ENCODE measurements at regions of chr12 and their contacts with region 1.

Region 1: DNA sequence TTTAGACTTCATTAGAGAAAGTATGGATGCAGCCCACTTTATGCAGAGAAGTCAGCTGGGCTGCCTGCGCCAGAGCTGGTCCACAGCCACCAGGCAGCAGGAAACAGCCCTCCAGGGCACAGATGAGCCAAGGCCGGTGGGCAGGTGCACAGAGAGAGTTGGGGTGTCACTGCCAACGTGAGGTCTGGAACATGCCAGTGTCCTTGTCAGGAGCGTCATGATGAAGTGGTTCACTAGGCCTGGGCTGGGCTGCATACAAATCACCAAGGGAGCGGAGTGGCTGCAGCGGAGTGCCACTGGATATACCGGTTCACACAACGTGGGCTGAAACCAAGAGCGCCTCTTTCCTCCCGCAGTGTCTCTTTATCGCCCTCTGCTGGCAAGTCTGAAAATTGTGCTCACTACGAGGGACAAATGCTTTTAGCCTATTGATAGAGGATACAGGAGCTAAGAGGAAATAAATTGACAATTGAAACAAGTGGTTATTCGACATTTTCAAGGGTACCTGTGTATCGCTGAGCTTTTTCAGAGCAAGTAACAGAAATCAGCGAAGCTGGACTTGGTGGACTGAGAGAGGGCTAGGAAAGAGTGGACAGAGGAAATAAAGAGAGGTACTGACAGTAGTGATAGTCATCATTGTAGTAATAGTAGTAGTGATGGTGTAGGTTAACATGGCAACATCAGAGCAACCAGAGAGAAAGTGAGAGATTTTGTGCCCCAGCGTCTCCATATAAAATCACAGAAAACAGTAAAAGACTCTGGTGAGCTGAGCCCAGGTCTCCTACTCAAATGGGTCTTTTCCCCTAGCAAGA is 52.0 kb upstream of the ITPR2 start:
- DNase-seq: peak; percentile 73
- H3K4me3 ChIP-seq: no peak overlapping the region; a peak in 1 of 4 replicates
- H3K27ac ChIP-seq: peak overlapping the region in 1 of 2 experiments; percentile 60; a peak in 1 of 4 replicates
- H3K4me1 ChIP-seq: peaks cover 0 to 4% of the 10 kb centered on the region in 2 experiments; a peak in 1 of 4 replicates
- H3K27me3 ChIP-seq: no peaks in the 10 kb centered on the region
- CTCF ChIP-seq: peak; percentile 94
- EP300 ChIP-seq: no peak
- RAD21 ChIP-seq: peak; percentile 95

Region 2: DNA sequence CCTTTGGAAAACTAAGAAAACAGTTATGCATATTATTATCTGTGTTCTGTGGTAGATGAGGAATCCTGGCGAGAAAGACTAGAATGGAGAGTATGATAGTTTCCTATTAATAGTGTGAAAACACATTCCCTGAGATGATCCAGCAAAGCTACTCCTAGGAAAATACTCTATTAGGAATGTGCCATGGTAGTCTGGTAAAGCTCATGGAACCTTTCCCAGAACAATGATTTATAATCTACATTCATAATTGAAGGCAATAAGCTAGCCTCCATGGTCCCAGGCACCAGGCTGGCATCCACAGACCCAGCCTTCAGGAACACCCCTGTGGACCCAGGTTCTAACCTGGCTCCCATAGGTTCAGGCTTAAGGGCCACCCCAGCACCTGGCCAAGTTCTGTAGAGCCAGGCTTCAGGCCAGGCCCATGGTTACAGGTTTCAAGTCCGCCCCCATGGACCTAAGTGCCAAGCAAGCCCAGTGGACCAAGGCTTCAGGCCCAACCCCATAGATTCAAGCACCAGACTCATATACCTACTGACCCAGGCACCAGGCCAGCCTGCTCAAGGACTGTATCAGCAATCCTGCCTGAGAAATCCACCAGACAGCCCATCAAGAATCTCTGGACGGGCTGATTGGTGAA is 124.2 kb before region 1 on chr12:
- CTCF ChIA-PET with region 1: no interaction called
- POLR2A ChIA-PET with region 1: no interaction called
- DNase-seq: no peak
- H3K4me3 ChIP-seq: peak overlapping the region in 1 of 2 experiments; percentile 6; a peak in 1 of 4 replicates
- H3K27ac ChIP-seq: no peak overlapping the region
- H3K4me1 ChIP-seq: no peaks in the 10 kb centered on the region
- H3K27me3 ChIP-seq: no peaks in the 10 kb centered on the region
- CTCF ChIP-seq: no peak
- EP300 ChIP-seq: no peak
- RAD21 ChIP-seq: no peak

Region 3: GRCh38 chr12:26832822-26833742 is 51.9 kb before region 1 on chr12 and contains the start of gene ITPR2:
- CTCF ChIA-PET with region 1: interaction called, 27 read pairs
- POLR2A ChIA-PET with region 1: interaction called, 3 read pairs
- DNase-seq: peak; percentile 100
- H3K4me3 ChIP-seq: peak within 1 kb of the TSS; percentile 76 to 92
- H3K27ac ChIP-seq: peak within 1 kb of the TSS; percentile 92 to 97
- H3K4me1 ChIP-seq: peaks cover 11 to 16% of the 10 kb centered on the region in 2 experiments; a peak in 3 of 4 replicates
- H3K27me3 ChIP-seq: no peaks in the 10 kb centered on the region
- CTCF ChIP-seq: peak; percentile 36
- EP300 ChIP-seq: peak in 1 of 2 experiments; percentile 6; a peak in 1 of 4 replicates
- RAD21 ChIP-seq: peak; percentile 41
- polyA plus RNA-seq, gene ITPR2: 2.3 and 3.0 TPM in 2 replicates

Region 4: DNA sequence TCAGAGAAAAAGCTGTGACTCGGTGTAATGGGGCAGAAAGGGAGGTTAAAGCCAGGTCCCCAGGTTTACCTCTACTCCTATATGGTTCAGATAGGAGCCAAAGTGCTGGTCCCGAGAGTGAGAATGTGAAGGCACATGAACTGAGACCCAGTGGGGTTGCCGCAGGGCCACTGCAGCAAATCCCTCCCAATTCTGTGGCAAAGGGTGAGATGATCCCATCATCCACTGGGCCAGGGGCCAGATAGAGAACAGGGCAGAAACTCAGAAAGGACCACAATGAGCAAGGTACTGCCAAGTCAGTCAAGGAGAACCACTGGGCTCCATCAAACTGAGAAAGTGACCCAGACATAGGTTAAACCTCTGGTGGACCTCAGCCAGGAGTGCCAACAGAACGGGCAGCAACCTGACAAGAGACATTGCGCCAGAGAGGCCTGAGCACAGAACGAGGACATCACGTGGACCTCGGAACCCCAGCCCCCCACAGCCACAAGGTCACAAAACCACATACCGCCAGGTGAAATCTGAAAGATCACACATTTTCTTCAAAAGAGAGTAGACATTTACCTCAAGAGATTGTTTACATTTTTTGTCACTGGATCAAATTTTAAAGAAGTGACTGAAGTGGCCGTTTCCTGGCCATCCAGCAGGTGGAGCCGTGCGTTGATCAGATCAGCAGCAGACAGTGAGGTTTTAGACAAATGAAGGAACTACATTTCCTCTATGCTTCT is 31.5 kb before region 1 on chr12:
- CTCF ChIA-PET with region 1: interaction called, 70 read pairs
- POLR2A ChIA-PET with region 1: no interaction called
- DNase-seq: peak; percentile 63
- H3K4me3 ChIP-seq: no peak overlapping the region; a peak in 1 of 4 replicates
- H3K27ac ChIP-seq: peak overlapping the region in 1 of 2 experiments; percentile 30; a peak in 1 of 4 replicates
- H3K4me1 ChIP-seq: peaks cover 4 to 12% of the 10 kb centered on the region in 2 experiments; a peak in 3 of 4 replicates
- H3K27me3 ChIP-seq: no peaks in the 10 kb centered on the region
- CTCF ChIP-seq: peak; percentile 91
- EP300 ChIP-seq: no peak
- RAD21 ChIP-seq: peak; percentile 90

Region 5: GRCh38 chr12:26870491-26871419 is 14.2 kb before region 1 on chr12:
- CTCF ChIA-PET with region 1: interaction called, 38 read pairs
- POLR2A ChIA-PET with region 1: interaction called, 3 read pairs
- DNase-seq: peak; percentile 53
- H3K4me3 ChIP-seq: no peak overlapping the region
- H3K27ac ChIP-seq: peak overlapping the region in 1 of 2 experiments; percentile 84; a peak in 2 of 4 replicates
- H3K4me1 ChIP-seq: peaks cover 0 to 23% of the 10 kb centered on the region in 2 experiments; a peak in 2 of 4 replicates
- H3K27me3 ChIP-seq: no peaks in the 10 kb centered on the region
- CTCF ChIP-seq: no peak
- EP300 ChIP-seq: peak in 1 of 2 experiments; percentile 79; a peak in 2 of 4 replicates
- RAD21 ChIP-seq: peak; percentile 9; the same call in 1 of the 2 replicates

Region 6: DNA sequence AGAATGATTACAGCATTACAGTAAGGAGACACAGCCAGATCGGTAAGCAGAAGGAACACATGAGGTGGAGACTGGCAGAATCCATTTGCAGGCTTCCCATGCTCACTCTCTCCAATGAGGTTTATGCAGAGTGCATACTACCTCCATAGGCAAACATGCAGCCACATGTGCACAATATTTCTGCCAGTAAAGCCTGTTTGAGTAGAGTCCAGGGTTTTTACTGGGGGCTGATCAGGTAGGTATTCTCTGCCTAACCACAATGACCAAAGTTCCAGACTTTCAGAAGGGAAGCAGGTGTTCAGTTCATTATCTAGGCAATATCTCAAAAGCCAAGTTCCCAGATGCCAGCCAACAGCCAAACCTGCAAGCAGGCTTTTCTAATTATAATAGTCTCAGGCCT is 21.7 kb after region 1 on chr12:
- CTCF ChIA-PET with region 1: interaction called, 14 read pairs
- POLR2A ChIA-PET with region 1: no interaction called
- DNase-seq: peak; percentile 10
- H3K4me3 ChIP-seq: no peak overlapping the region
- H3K27ac ChIP-seq: peak overlapping the region in 1 of 2 experiments; percentile 93; a peak in 2 of 4 replicates
- H3K4me1 ChIP-seq: peaks cover 0 to 12% of the 10 kb centered on the region in 2 experiments; a peak in 2 of 4 replicates
- H3K27me3 ChIP-seq: no peaks in the 10 kb centered on the region
- CTCF ChIP-seq: no peak
- EP300 ChIP-seq: no peak; a peak in 1 of 4 replicates
- RAD21 ChIP-seq: no peak

Region 7: GRCh38 chr12:27305673-27306456 is 420.9 kb after region 1 on chr12:
- CTCF ChIA-PET with region 1: interaction called, 14 read pairs
- POLR2A ChIA-PET with region 1: no interaction called
- DNase-seq: peak; percentile 24
- H3K4me3 ChIP-seq: no peak overlapping the region
- H3K27ac ChIP-seq: peak overlapping the region in 1 of 2 experiments; percentile 31; a peak in 1 of 4 replicates
- H3K4me1 ChIP-seq: peaks cover 0 to 4% of the 10 kb centered on the region in 2 experiments; a peak in 2 of 4 replicates
- H3K27me3 ChIP-seq: no peaks in the 10 kb centered on the region
- CTCF ChIP-seq: peak; percentile 74
- EP300 ChIP-seq: no peak
- RAD21 ChIP-seq: peak; percentile 65

Measured in SK-N-SH (cell line).